IMR-90 (cell line): ENCODE measurements at regions of chr4 and their contacts with region 1.

Region 1: DNA sequence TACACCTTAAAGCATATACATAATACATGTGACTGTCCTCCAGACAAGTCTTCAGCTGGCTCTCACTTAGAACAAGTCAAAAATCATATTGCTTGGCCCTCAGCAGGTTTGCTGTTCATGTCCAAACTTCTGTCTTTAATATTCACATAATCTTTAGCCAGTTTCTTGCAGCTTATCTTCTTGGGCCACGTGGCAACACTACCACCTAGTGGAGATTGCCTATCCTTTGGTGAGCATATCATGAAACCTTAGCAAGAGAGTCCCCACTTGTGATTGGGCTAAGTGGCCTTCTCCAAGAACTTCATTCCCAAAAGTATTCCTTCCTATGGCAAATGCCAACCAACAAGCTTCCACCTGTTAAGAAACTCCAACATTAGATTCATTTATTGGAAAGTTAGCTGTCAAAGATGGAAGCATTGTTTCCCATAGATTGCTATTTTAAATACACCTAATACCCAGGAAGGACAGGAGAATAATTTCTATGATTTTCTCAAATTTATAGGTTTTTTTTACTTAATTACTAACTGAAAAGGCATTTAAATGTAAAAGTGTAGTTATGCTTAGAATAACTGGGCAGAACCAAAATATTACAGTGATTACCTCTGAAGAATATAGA is 231.9 kb upstream of the INTU start:
- DNase-seq: peak; percentile 83
- ATAC-seq: peak; percentile 91
- H3K4me3 ChIP-seq: no peak overlapping the region
- H3K27ac ChIP-seq: no peak overlapping the region
- H3K4me1 ChIP-seq: peaks cover 2% of the 10 kb centered on the region; the same call in 1 of the 2 replicates
- H3K27me3 ChIP-seq: peaks cover 4% of the 10 kb centered on the region; the same call in 1 of the 2 replicates
- CTCF ChIP-seq: peak; percentile 90
- POLR2A ChIP-seq: no peak
- RAD21 ChIP-seq: peak; percentile 94

Region 2: DNA sequence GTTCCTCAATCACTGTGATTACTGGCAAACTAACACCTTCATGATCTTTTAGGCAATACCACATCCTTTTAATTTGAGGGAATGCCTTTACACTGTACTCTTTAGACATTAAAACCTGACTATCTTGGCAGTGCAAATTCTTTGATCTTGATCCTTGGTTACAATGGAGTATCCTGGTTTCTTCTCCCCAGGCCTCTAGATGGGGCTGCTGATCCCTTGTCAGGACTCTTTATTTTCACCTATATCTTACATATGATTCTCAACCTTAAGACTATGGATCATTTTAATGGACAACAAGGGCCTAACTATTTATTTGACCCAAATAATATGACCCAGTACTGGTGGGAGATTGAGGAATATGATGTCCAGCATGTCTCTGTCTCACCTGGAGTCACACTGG is 773.6 kb before region 1 on chr4:
- CTCF ChIA-PET with region 1: no interaction called
- POLR2A ChIA-PET with region 1: no interaction called
- dilution Hi-C with region 1: no loop called
- in situ Hi-C with region 1: no loop called
- intact Hi-C with region 1: loop called (anchors 5 kb)
- DNase-seq: peak; percentile 38
- ATAC-seq: peak; percentile 82
- H3K4me3 ChIP-seq: no peak overlapping the region
- H3K27ac ChIP-seq: no peak overlapping the region
- H3K4me1 ChIP-seq: peaks cover 3% of the 10 kb centered on the region; the same call in 1 of the 2 replicates
- H3K27me3 ChIP-seq: no peaks in the 10 kb centered on the region
- CTCF ChIP-seq: peak; percentile 69
- POLR2A ChIP-seq: no peak
- RAD21 ChIP-seq: peak; percentile 70

Region 3: GRCh38 chr4:126899331-126899801 is 501.5 kb before region 1 on chr4:
- CTCF ChIA-PET with region 1: no interaction called
- POLR2A ChIA-PET with region 1: no interaction called
- dilution Hi-C with region 1: no loop called
- in situ Hi-C with region 1: no loop called
- intact Hi-C with region 1: loop called (anchors 10 kb)
- DNase-seq: peak; percentile 94
- ATAC-seq: peak; percentile 92
- H3K4me3 ChIP-seq: no peak overlapping the region
- H3K27ac ChIP-seq: peak overlapping the region; percentile 95
- H3K4me1 ChIP-seq: peaks cover 16% of the 10 kb centered on the region
- H3K27me3 ChIP-seq: no peaks in the 10 kb centered on the region
- CTCF ChIP-seq: no peak
- POLR2A ChIP-seq: no peak
- RAD21 ChIP-seq: no peak

Region 4: DNA sequence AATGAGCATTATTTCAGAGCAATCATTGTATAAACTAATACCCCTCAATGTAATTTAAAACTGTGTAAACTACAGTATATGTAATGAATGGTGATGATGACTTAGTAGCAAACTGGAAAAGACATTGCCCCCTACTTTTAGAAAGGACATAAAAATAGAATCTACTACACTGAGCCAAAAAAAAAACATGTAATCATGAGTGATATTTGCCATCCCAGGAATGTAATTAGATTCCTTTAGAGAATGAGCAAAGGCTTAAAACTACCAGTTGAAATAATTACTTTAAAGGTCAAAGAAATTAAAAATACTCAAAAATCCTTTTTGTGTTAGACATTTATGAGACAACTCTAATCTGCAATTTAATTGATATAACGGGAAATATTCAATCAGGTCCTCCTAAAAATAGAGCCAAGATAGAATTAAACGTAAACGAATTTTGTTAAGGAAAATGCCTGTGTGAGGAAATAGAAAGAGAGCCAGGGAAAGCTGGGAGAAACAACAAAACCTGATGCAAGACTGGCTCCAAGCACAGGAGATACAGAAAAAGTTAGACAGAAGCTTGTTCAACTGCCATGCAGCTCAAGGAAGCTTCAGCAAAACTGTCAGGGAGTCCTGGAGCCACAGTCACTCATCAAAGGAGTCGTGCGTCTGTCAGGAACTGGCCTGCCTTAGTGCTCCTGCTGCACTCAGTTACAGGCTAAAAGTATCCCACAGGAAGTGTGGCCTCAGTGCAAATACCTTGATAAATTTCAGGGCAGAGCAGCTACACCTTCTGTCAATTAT is 423.8 kb before region 1 on chr4:
- CTCF ChIA-PET with region 1: no interaction called
- POLR2A ChIA-PET with region 1: no interaction called
- dilution Hi-C with region 1: no loop called
- in situ Hi-C with region 1: no loop called
- intact Hi-C with region 1: no loop called
- DNase-seq: peak; percentile 20
- ATAC-seq: peak; percentile 49
- H3K4me3 ChIP-seq: no peak overlapping the region
- H3K27ac ChIP-seq: peak overlapping the region; percentile 67
- H3K4me1 ChIP-seq: peaks cover 2% of the 10 kb centered on the region; the same call in 1 of the 2 replicates
- H3K27me3 ChIP-seq: no peaks in the 10 kb centered on the region
- CTCF ChIP-seq: no peak
- POLR2A ChIP-seq: no peak
- RAD21 ChIP-seq: no peak

Region 5: GRCh38 chr4:127188856-127189255 is 212.0 kb before region 1 on chr4:
- CTCF ChIA-PET with region 1: no interaction called
- POLR2A ChIA-PET with region 1: no interaction called
- dilution Hi-C with region 1: no loop called
- in situ Hi-C with region 1: no loop called
- intact Hi-C with region 1: loop called (anchors 2 kb)
- DNase-seq: peak; percentile 25
- ATAC-seq: no peak
- H3K4me3 ChIP-seq: no peak overlapping the region
- H3K27ac ChIP-seq: no peak overlapping the region
- H3K4me1 ChIP-seq: no peaks in the 10 kb centered on the region
- H3K27me3 ChIP-seq: no peaks in the 10 kb centered on the region
- CTCF ChIP-seq: 0 out of 2 replicates have a peak, but pooled peaks have one; percentile 23
- POLR2A ChIP-seq: no peak
- RAD21 ChIP-seq: peak; percentile 44